ENCODE measurements at regions of chr6 and their contacts with region 1.

Region 1: DNA sequence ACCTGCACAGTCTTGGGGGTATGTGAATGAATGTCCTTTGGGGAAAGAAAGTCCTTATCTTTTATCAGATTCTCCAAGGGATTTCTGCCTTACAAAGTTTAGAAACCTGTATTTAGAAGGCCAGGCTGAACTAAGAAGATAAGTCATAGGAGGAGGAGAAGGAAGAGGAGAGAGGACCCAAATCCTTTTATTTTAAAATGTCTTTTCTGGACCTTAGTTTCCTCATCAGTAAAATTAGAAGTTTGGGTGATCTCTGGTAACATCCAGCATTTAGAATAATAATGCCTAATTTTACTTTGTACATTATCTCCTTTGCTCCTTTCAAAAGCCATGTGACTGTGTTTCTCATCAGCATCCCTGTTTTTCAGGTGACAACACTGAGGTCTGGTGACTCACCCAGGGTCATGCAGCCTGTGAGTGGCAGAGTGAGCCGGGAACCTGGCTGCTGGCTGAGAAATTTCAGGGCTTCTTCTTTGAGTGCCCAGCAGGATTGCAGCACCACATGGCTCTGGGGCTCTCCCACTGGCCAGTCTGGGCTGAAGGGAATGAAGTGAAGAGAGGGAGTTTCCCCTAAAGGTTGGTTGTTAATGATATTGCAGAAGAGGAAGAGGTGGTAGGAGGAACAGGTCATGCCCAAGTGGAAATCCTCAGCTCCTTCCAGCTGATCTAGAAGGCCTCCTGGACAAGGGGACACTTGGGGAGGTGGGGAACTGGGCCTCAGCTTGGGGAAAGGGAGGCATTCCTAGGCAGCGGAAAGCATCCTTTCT is 34.0 kb downstream of the VEGFA start:
- DNase-seq: peak; percentile 70 to 75
- H3K4me3 ChIP-seq: no peak overlapping the region
- H3K4me3 Mint-ChIP-seq: peak overlapping the region; percentile 59
- H3K27ac Mint-ChIP-seq: peak overlapping the region; percentile 93
- H3K4me1 ChIP-seq: peaks cover 94% of the 10 kb centered on the region
- H3K4me1 Mint-ChIP-seq: peaks cover 82% of the 10 kb centered on the region
- H3K27me3 ChIP-seq: no peaks in the 10 kb centered on the region
- H3K27me3 Mint-ChIP-seq: no peaks in the 10 kb centered on the region
- CTCF ChIP-seq: no peak

Region 2: DNA sequence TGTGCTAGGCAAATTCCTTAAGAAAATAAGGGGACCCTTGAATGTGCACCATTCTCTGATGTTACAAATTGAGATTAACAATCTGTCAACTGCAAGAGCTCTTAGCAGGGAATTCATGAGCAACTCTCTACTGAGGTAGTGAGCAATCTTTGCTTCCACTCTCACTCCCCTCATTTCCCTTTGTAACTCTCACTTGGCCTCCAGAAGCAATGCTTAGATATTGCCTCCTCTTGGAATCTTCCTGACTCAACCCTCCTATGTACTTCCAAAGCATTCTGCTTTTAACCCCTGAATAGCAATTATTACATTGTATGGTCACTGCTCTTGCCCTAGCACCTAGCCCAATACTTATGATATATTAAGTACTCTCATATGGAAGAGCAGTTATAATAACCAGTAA is 244.6 kb before region 1 on chr6:
- CTCF ChIA-PET with region 1: no interaction called
- POLR2A ChIA-PET with region 1: no interaction called
- intact Hi-C with region 1: no loop called
- DNase-seq: no peak
- H3K4me3 ChIP-seq: no peak overlapping the region
- H3K4me3 Mint-ChIP-seq: no peak overlapping the region
- H3K27ac Mint-ChIP-seq: no peak overlapping the region
- H3K4me1 ChIP-seq: no peaks in the 10 kb centered on the region
- H3K4me1 Mint-ChIP-seq: no peaks in the 10 kb centered on the region
- H3K27me3 ChIP-seq: no peaks in the 10 kb centered on the region
- H3K27me3 Mint-ChIP-seq: no peaks in the 10 kb centered on the region
- CTCF ChIP-seq: no peak

Region 3: GRCh38 chr6:43781941-43782704 is 21.8 kb before region 1 on chr6:
- CTCF ChIA-PET with region 1: interaction called, 3 read pairs
- POLR2A ChIA-PET with region 1: interaction called, 10 read pairs
- intact Hi-C with region 1: no loop called
- DNase-seq: no peak
- H3K4me3 ChIP-seq: no peak overlapping the region
- H3K4me3 Mint-ChIP-seq: no peak overlapping the region
- H3K27ac Mint-ChIP-seq: peak overlapping the region; percentile 1
- H3K4me1 ChIP-seq: no peaks in the 10 kb centered on the region
- H3K4me1 Mint-ChIP-seq: peaks cover 6% of the 10 kb centered on the region
- H3K27me3 ChIP-seq: no peaks in the 10 kb centered on the region
- H3K27me3 Mint-ChIP-seq: no peaks in the 10 kb centered on the region
- CTCF ChIP-seq: no peak

Region 4: GRCh38 chr6:43817192-43817591 is 13.2 kb after region 1 on chr6:
- CTCF ChIA-PET with region 1: interaction called, 5 read pairs
- POLR2A ChIA-PET with region 1: interaction called, 3 read pairs
- intact Hi-C with region 1: loop called (anchors 1 kb)
- DNase-seq: peak; percentile 66 to 69
- H3K4me3 ChIP-seq: no peak overlapping the region
- H3K4me3 Mint-ChIP-seq: no peak overlapping the region
- H3K27ac Mint-ChIP-seq: peak overlapping the region; percentile 56
- H3K4me1 ChIP-seq: peaks cover 57% of the 10 kb centered on the region
- H3K4me1 Mint-ChIP-seq: peaks cover 55% of the 10 kb centered on the region
- H3K27me3 ChIP-seq: no peaks in the 10 kb centered on the region
- H3K27me3 Mint-ChIP-seq: no peaks in the 10 kb centered on the region
- CTCF ChIP-seq: peak; percentile 19 to 80

Region 5: DNA sequence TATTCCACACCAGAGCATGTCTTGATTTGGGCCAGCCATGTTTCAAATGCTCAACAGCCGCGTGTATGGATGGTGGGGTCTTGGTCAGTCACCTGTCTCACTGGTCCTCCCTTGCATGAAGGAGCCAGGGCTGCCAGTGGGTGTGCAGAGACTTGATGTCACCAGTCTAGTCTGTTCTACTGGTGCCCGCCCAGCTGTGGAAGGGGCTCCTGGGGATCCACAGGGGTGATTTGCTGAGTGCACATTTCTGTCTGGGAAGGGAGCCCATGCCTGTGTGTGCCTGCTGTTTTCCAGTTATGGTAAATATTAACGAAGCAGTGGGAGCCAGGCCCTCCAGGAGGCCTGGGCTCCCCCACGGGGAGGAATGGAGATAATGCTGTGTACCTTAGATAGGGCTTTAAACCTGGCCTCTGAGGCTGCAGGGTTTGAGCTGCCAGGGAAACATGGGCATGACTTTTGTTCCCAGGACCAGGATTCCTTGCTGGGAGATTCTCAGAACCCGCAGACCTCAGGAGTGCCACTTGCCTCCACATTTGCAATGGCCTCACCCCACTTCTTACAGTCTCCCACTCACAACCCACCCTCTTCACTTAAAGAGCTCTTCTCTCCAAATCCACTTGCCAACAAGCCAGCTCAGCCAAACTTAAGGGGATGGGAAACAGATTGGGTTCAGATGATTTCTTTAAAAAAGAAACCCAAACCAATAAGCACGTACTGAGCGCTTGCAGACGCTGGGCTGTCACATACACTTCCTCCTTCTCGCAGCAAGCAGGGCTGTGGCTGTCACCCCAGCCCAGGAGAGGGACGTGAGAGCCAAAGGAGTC is 20.1 kb after region 1 on chr6:
- CTCF ChIA-PET with region 1: interaction called, 5 read pairs
- POLR2A ChIA-PET with region 1: interaction called, 3 read pairs
- intact Hi-C with region 1: loop called (anchors 1 kb)
- DNase-seq: peak; percentile 70 to 77
- H3K4me3 ChIP-seq: no peak overlapping the region
- H3K4me3 Mint-ChIP-seq: peak overlapping the region; percentile 42
- H3K27ac Mint-ChIP-seq: peak overlapping the region; percentile 76
- H3K4me1 ChIP-seq: peaks cover 75% of the 10 kb centered on the region
- H3K4me1 Mint-ChIP-seq: peaks cover 60% of the 10 kb centered on the region
- H3K27me3 ChIP-seq: no peaks in the 10 kb centered on the region
- H3K27me3 Mint-ChIP-seq: no peaks in the 10 kb centered on the region
- CTCF ChIP-seq: peak in 1 of 2 experiments; percentile 25

Region 6: GRCh38 chr6:43833223-43833995 is 29.4 kb after region 1 on chr6:
- CTCF ChIA-PET with region 1: interaction called, 6 read pairs
- POLR2A ChIA-PET with region 1: no interaction called
- intact Hi-C with region 1: loop called (anchors 1 kb)
- DNase-seq: peak; percentile 75 to 82
- H3K4me3 ChIP-seq: no peak overlapping the region
- H3K4me3 Mint-ChIP-seq: no peak overlapping the region
- H3K27ac Mint-ChIP-seq: peak overlapping the region; percentile 43
- H3K4me1 ChIP-seq: peaks cover 86% of the 10 kb centered on the region
- H3K4me1 Mint-ChIP-seq: peaks cover 46% of the 10 kb centered on the region
- H3K27me3 ChIP-seq: no peaks in the 10 kb centered on the region
- H3K27me3 Mint-ChIP-seq: no peaks in the 10 kb centered on the region
- CTCF ChIP-seq: no peak

Region 7: GRCh38 chr6:43900911-43901732 is 97.2 kb after region 1 on chr6:
- CTCF ChIA-PET with region 1: no interaction called
- POLR2A ChIA-PET with region 1: no interaction called
- intact Hi-C with region 1: no loop called
- DNase-seq: peak in 1 of 2 experiments; percentile 22
- H3K4me3 ChIP-seq: no peak overlapping the region
- H3K4me3 Mint-ChIP-seq: no peak overlapping the region
- H3K27ac Mint-ChIP-seq: peak overlapping the region; percentile 69
- H3K4me1 ChIP-seq: no peaks in the 10 kb centered on the region
- H3K4me1 Mint-ChIP-seq: peaks cover 16% of the 10 kb centered on the region
- H3K27me3 ChIP-seq: no peaks in the 10 kb centered on the region
- H3K27me3 Mint-ChIP-seq: no peaks in the 10 kb centered on the region
- CTCF ChIP-seq: no peak

Region 8: GRCh38 chr6:44338228-44339122 is 534.5 kb after region 1 on chr6:
- CTCF ChIA-PET with region 1: no interaction called
- POLR2A ChIA-PET with region 1: no interaction called
- intact Hi-C with region 1: no loop called
- DNase-seq: peak; percentile 51 to 68
- H3K4me3 ChIP-seq: no peak overlapping the region
- H3K4me3 Mint-ChIP-seq: no peak overlapping the region
- H3K27ac Mint-ChIP-seq: no peak overlapping the region
- H3K4me1 ChIP-seq: no peaks in the 10 kb centered on the region
- H3K4me1 Mint-ChIP-seq: no peaks in the 10 kb centered on the region
- H3K27me3 ChIP-seq: no peaks in the 10 kb centered on the region
- H3K27me3 Mint-ChIP-seq: peaks cover 3% of the 10 kb centered on the region
- CTCF ChIP-seq: peak; percentile 65 to 84